PC-3 (cell line): ENCODE measurements at regions of chr14 and their contacts with region 1.

Region 1: DNA sequence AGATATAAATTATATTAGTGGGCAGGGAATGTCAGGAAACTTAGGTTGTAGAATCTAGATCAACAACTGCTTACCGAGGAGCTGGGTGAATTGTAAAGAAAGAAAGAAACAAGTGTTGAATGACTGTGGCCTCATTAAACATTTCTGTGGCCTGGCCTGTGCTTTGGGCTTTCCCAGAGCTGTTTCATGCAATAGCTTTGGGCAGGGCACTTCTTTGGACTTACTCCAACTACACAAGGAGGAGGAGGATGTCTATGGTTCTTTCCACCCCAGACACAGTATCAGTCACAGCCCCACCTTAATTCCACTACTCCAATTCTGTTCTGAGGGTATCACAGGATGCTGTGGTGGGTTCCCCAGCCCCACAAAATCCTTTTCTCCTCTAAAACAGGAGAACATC is 38.0 kb downstream of the DPF3 start:
- DNase-seq: peak; percentile 62
- ATAC-seq: peak; percentile 88
- H3K4me3 ChIP-seq: no peak overlapping the region
- H3K27ac ChIP-seq: no peak overlapping the region
- H3K4me1 ChIP-seq: peaks cover 16% of the 10 kb centered on the region
- H3K27me3 ChIP-seq: no peaks in the 10 kb centered on the region
- CTCF ChIP-seq: no peak

Region 2: DNA sequence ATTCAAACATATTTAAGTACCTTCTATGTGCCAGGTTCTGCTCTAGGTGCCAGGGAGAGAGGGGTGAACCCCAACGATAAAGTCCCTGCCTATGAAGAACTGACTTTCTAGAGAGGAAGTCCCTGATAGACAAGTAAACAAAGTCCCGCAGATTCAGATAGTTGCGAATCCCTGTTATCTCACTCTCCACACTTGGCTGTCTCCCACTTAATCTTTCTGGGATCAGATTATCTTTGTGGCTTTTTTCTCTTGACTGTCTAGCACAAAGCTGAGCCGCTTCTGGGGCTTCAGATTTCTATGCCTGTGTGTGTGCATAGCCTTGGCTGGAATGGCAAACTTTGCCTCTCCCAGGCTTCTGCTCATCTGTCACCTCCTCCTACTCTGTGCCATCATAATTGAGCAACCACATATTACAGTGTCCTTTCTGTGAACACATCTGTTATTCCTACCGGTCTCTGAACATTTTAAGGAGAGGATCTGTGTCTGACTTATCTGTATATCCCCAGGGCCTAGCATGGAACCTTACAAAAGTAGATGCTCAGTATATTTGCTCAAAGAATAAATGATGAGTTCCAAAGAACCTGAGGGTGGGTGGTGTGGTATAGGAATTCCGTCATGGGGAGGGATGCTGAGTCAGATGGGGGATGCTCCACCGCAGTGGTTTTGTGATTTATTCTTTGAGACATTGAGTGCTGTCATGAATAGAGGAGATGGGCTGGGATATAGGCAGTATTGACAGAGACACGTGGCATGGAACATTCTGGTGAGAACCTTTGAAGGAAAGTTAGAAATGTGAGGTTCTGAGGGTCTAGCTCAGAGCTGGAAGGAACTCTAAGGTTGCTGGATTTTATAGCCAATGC is 895.2 kb before region 1 on chr14:
- CTCF ChIA-PET with region 1: no interaction called
- POLR2A ChIA-PET with region 1: no interaction called
- intact Hi-C with region 1: no loop called
- DNase-seq: no peak
- ATAC-seq: no peak
- H3K4me3 ChIP-seq: no peak overlapping the region
- H3K27ac ChIP-seq: no peak overlapping the region
- H3K4me1 ChIP-seq: no peaks in the 10 kb centered on the region
- H3K27me3 ChIP-seq: peaks cover 69% of the 10 kb centered on the region
- CTCF ChIP-seq: no peak

Region 3: GRCh38 chr14:72812292-72812911 is 43.5 kb before region 1 on chr14:
- CTCF ChIA-PET with region 1: no interaction called
- POLR2A ChIA-PET with region 1: no interaction called
- intact Hi-C with region 1: no loop called
- DNase-seq: no peak
- ATAC-seq: no peak; the same call in 1 of the 2 replicates
- H3K4me3 ChIP-seq: no peak overlapping the region
- H3K27ac ChIP-seq: no peak overlapping the region
- H3K4me1 ChIP-seq: peaks cover 5% of the 10 kb centered on the region; the same call in 1 of the 2 replicates
- H3K27me3 ChIP-seq: no peaks in the 10 kb centered on the region
- CTCF ChIP-seq: no peak

Region 4: DNA sequence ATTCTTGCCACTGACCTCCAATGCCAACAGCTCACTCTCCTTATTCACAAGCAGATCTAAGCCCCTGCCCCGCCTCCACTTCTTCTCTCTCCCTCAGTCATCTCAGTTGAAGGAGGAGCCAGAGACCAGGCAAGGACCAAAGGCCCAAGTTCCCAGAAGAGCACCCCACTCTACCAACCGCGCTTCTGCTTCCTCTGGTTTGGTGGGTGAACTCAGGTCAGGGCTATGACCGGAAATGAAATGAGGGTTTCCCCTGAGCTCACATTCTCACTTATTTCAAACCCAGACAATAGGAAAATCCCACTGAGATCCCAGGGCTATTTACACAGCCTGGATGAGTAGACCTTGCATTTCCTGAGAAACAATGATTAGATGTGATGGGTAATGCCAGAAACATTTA is 28.0 kb after region 1 on chr14:
- CTCF ChIA-PET with region 1: interaction called, 3 read pairs
- POLR2A ChIA-PET with region 1: no interaction called
- intact Hi-C with region 1: loop called (anchors 2 kb)
- DNase-seq: peak; percentile 93
- ATAC-seq: peak; percentile 92
- H3K4me3 ChIP-seq: no peak overlapping the region
- H3K27ac ChIP-seq: peak overlapping the region; percentile 97
- H3K4me1 ChIP-seq: peaks cover 23% of the 10 kb centered on the region
- H3K27me3 ChIP-seq: no peaks in the 10 kb centered on the region
- CTCF ChIP-seq: no peak

Region 5: DNA sequence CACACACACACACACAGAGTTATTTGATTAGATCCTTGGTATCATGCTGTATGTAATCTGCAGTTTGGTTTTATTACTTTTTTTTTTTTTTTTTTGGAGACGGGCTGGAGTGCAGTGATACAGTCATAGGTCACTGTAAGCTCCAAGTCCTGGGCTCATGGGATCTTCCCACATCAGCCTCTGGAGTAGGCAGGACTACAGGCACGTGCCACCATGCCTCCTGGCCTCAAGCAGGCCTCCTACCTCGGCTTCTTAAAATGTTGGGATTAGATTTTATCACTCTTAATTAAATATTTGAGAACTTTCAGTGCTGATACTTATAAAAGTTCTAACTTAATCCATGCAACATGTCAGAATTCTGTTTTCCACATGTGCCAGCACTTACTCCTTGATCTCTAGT is 249.1 kb after region 1 on chr14:
- CTCF ChIA-PET with region 1: no interaction called
- POLR2A ChIA-PET with region 1: no interaction called
- intact Hi-C with region 1: no loop called
- DNase-seq: no peak
- ATAC-seq: peak; percentile 8; the same call in 1 of the 2 replicates
- H3K4me3 ChIP-seq: no peak overlapping the region
- H3K27ac ChIP-seq: no peak overlapping the region
- H3K4me1 ChIP-seq: no peaks in the 10 kb centered on the region; the same call in 1 of the 2 replicates
- H3K27me3 ChIP-seq: no peaks in the 10 kb centered on the region
- CTCF ChIP-seq: no peak